Right ventricle myocardium superior (tissue), 1 donor: ENCODE measurements at regions of chr17 and their contacts with region 1.

Region 1: DNA sequence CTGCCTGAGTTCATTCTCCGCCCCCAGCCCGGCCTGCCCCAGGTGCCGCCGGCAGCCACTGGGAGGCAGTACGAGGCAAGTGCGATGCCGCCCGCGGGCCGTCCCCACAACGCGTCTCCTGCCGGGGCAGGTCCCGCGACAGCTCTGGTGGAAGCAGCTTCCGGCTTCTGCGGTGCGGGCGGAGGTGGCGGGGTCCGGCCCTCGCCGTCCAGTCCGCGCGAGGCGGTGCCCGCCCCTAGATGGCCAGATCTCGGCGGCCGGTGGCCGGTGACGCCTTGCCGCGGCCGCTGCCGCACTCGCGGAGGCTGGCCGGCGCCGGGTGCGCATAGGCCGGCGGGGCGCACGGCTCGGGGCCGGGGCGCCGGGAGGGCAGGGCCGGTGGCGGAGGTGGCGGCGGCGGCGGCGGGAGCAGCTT is 1.8 kb downstream of the GJD3 start:
- DNase-seq: peak; percentile 77
- ATAC-seq: peak; percentile 38

Region 2: DNA sequence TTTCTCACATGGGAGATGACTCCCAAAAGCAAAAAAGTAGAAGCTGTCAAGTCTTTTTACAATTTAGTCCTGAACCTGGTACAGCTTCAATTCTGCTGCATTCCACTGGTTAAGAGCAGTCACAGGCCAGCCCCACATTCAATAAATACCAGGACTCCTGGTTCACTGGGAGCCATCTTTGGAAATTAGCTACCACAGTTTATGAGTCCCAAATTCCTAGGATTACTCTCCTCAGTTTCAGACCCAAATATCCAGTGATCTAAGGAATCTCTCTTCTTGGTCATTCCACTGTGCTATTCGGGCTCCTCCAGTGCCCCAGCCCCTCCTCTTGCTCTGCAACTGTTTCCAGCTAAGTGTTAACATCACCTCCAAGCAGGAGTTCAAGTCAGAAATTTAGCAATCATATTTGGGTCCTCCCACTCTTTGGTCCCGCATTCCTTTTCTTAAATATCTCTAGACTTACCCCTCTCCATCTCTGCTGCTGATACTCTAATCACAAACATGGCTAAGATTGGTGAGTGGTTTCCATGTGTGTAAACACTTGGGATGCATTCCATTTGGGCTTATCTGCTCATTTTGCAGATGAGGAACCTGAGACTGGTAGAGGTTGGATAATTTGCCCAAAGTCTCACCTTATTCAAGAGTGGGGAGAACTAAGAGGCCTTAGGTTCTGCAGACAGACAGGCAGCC is 153.2 kb before region 1 on chr17:
- intact Hi-C with region 1: loop called (anchors 10 kb)
- DNase-seq: no peak
- ATAC-seq: no peak

Region 3: DNA sequence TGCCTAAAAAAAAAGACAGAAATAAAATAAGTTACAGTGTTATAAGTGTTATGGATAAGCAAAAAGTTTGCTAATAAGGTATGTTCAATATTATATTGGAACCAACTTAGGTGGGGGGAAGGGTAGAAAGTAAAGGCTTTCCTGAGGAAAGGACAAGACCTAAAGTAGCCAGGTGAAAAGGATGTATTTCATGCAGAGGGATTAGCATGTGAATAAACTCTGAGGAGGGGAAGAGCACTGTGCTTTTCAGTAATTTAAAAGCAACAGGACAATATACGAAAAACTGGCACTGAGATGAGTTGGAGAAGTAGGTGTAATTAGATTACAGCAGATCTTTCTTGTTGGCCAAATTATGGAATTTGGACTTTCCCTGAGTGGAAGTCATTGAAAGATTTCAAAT is 47.4 kb after region 1 on chr17:
- intact Hi-C with region 1: loop called (anchors 5 kb)
- DNase-seq: no peak
- ATAC-seq: no peak

Region 4: DNA sequence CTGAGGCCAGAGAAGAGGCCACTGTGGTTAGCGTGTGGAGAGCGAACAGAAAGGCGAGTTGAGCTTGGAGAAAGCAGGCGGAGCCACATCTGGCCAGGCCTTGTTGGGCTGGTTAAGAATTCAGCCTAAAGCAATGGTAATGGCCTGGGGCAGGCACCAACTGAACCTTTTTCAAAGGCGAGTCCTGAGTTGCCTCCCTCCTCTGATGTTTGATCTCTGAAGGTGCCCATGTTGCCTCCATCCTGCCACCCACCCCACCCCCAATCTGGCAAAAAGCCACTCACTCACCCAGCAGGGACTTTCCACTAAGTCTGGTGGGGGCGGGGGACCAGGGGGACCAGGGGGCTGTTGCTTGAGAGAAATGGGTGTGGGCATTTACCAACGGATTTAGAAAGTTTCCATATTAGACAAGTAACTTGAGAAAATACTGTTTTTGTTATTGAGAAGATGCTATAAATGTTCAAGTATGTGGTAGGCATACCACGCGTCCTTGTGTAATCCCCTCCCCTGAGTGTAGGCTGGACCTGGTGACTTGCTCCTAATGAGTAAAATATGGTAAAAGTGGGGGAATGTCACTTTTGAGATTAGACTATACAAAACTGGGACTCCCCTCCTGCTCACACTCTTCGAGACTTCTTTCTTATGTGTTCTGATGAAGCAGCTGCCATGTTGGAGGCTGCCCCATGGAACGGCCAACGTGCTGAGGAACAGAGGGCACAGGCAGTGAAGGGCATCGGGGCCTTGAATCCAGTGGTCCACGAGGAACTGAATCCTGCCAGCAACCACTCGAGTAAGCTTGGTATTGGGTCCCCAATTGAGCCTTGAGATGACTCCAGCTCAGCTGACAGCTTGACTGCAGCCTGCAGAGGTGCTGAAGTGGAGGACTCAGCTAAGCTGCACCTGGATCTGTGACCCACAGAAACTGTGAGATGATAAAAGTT is 168.6 kb after region 1 on chr17:
- intact Hi-C with region 1: loop called (anchors 5 kb)
- DNase-seq: no peak
- ATAC-seq: no peak

Region 5: DNA sequence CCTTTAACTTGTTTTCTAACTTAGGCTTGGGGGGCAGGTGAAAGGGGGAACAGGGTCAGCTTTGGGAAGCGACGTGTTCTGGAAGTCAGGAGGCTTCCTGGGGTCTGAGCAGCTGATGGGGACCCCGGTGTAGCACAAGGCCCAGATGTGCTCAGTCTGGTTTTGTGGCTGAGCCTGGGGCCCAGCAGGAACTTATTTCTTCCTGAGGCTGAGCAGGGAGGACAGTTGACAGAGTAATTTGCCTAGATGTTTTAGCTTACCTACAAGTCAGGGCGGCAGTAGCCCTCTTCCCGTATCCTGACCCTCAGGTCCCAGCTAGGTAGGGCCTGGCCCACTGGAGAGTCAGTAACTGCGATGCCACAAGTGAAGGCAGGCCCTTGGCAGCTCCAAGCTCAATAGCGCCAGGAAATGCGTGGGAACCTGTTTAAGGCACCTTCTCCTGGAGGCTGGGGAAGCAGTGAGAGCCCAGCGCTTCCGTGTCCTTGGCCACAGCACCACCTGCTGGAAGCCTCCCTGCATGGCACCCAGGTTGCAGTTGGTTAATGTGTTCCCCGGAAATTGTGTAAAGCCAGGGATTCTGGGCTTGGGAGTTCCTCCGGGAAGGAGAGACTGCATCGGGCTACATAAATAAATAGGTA is 197.4 kb after region 1 on chr17:
- intact Hi-C with region 1: loop called (anchors 5 kb)
- DNase-seq: peak; percentile 91
- ATAC-seq: peak; percentile 89